ENCODE measurements at regions of chr13 and their contacts with region 1.

Region 1: GRCh38 chr13:47774671-47774994 is 226.4 kb downstream of the SUCLA2 start:
- DNase-seq: no peak
- H3K4me3 ChIP-seq: no peak overlapping the region
- H3K27ac ChIP-seq: no peak overlapping the region
- H3K4me1 ChIP-seq: no peaks in the 10 kb centered on the region
- H3K27me3 ChIP-seq: no peaks in the 10 kb centered on the region
- CTCF ChIP-seq: no peak

Region 2: DNA sequence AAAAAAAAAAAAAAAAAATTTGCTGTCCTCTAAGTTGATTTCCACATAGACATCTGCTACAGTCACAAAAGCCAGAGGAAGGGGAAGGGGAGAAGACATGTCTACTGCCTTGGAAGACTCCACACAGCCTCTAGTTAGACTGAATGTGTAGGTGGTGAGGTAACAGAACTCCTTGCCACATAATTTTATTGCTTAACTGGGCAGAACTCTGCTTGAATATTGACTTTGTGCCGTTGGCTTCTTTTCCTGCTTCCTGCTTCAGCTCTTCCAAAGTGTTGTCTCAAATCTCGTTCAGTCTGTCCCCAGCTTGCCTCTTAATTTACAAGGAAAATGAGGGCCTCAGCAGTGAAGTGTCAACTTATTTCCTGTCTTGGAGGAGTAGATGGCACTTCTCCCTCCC is 1014.8 kb before region 1 on chr13:
- CTCF ChIA-PET with region 1: no interaction called
- dilution Hi-C with region 1: no loop called
- in situ Hi-C with region 1: no loop called
- intact Hi-C with region 1: loop called (anchors 5 kb)
- DNase-seq: peak; percentile 23
- H3K4me3 ChIP-seq: no peak overlapping the region
- H3K27ac ChIP-seq: no peak overlapping the region
- H3K4me1 ChIP-seq: peaks cover 5% of the 10 kb centered on the region
- H3K27me3 ChIP-seq: no peaks in the 10 kb centered on the region
- CTCF ChIP-seq: no peak

Region 3: DNA sequence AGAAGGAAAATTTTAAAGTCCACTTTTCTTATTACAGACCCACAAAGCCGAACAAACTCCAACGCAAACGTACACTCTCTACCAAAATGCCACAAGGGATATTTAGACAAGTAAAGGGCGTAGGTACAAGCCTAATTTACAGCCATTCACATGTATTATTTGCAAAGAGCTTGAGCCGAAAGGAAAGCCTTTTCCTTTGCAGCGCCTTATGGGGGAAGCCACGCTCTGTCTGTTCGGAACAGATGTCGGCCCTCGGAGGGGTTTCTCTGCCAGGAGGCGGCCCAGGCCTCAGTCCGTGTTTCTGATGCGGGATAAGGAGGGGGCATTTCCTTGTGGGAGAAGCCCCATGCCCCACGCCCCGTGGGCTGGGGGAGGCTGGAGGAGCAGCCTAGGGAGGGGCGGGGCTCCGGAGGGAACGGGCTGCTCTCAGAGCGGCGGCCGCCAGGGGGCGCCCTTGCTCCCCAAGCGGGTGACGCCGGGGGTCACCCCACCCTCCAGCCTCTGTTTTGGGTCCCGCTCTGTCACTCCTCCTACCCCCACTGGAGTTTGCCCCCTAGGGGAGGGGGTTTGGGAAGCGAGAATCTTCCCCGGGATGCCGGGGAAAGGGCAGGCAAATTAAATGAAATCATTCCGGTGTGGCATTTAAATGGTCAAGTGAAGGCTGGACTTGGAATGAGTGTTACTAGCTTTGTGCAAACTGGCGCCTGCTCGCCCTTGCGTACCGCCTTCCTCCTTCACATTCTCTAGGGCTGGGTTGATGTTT is 880.7 kb before region 1 on chr13:
- CTCF ChIA-PET with region 1: no interaction called
- dilution Hi-C with region 1: no loop called
- in situ Hi-C with region 1: no loop called
- intact Hi-C with region 1: loop called (anchors 1 kb)
- DNase-seq: peak; percentile 31
- H3K4me3 ChIP-seq: peak overlapping the region; percentile 47 to 58 (median 57)
- H3K27ac ChIP-seq: no peak overlapping the region
- H3K4me1 ChIP-seq: peaks cover 4% of the 10 kb centered on the region
- H3K27me3 ChIP-seq: peaks cover 6% of the 10 kb centered on the region
- CTCF ChIP-seq: peak; percentile 51 to 94

Region 4: DNA sequence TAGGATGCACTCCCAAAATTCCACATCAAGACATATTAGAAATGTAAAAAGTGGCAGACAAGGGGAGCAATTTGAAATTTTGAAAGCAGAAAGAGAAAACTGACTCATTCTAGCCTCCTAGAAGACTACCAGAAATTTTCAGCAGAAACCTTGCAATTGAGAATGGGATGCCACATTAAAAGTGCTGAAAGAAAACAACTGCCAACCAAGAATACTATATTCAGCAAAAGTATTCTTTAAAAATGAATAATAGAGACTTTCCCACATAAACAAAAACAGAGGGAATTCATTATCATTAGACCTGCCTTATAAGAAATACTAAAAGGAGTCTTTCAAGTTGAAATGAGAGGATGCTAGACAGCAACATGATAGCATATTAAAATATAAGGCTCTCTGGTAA is 799.5 kb before region 1 on chr13:
- CTCF ChIA-PET with region 1: no interaction called
- dilution Hi-C with region 1: no loop called
- in situ Hi-C with region 1: loop called (anchors 10 to 25 kb)
- intact Hi-C with region 1: loop called (anchors 1 kb)
- DNase-seq: no peak
- H3K4me3 ChIP-seq: no peak overlapping the region
- H3K27ac ChIP-seq: no peak overlapping the region
- H3K4me1 ChIP-seq: no peaks in the 10 kb centered on the region
- H3K27me3 ChIP-seq: no peaks in the 10 kb centered on the region
- CTCF ChIP-seq: no peak

Region 5: DNA sequence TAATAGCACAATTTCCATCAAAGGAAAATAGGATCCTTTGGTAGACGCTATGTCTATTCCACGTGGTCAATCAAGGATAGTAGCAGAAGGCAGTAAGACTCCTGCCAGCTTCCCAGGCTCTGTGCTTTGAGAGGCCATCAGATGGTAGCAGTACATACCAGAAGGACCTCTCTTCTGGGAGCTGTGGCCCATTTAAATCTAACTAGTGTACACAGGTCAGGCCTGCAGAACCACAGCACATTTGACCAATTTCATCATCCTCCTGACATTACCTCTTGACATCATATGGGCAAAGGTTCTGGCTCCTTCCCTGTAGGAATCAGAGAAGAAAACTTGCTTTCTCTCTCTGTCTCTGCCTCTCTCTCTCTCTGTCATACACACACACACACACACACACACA is 648.2 kb before region 1 on chr13:
- CTCF ChIA-PET with region 1: no interaction called
- dilution Hi-C with region 1: no loop called
- in situ Hi-C with region 1: no loop called
- intact Hi-C with region 1: loop called (anchors 2 kb)
- DNase-seq: no peak
- H3K4me3 ChIP-seq: no peak overlapping the region
- H3K27ac ChIP-seq: no peak overlapping the region
- H3K4me1 ChIP-seq: peaks cover 2% of the 10 kb centered on the region
- H3K27me3 ChIP-seq: no peaks in the 10 kb centered on the region
- CTCF ChIP-seq: peak in 1 of 2 donors; percentile 4